ENCODE measurements at regions of chr1 and their contacts with region 1.

Region 1: DNA sequence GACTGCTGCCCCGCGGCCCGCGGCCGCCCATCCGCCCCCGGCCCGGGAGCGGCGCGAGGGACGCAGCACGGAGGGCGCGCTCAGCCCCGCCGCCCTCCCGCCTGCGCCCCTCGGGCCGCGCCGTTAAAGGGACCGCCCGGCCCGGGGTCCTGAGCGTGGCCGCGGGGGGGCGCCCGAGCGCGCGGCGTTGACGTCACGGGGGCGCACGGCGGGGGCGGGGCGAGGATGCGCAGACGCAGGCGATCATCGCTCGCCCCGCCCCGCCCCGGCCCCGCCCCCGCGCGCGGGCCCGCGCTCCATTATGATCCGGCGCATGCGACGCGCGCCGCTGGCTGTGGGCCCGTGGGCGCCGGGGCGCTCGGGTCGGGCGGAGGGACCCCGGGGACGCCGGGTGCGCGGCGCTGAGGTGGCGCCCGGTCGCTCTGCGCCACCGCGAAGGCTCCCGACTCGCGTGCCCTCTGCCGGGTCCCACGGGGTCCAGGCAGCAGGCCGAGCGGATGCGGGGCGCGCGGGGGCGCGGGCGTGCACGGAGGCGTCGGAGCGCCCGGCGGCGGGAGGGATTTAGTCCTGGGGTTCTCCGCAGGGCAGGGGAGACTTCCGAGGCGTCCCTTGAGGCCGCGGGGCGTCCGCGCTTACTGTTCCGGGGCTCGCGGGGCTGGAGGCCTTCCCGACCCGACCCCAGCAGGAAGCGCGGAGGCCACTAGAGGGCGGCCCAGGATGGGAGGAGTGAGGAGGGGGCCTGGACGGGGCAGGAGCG is at the start of gene DVL1:
- DNase-seq: peak in 1 of 2 experiments; percentile 60
- H3K4me3 ChIP-seq: peak within 1 kb of the TSS; percentile 85
- H3K27ac ChIP-seq: peak within 1 kb of the TSS; percentile 56
- H3K4me1 ChIP-seq: peaks cover 33% of the 10 kb centered on the region
- H3K27me3 ChIP-seq: no peaks in the 10 kb centered on the region
- CTCF ChIP-seq: peak; percentile 67
- total RNA-seq, gene DVL1: 95.8 and 98.4 TPM in 2 replicates

Region 2: DNA sequence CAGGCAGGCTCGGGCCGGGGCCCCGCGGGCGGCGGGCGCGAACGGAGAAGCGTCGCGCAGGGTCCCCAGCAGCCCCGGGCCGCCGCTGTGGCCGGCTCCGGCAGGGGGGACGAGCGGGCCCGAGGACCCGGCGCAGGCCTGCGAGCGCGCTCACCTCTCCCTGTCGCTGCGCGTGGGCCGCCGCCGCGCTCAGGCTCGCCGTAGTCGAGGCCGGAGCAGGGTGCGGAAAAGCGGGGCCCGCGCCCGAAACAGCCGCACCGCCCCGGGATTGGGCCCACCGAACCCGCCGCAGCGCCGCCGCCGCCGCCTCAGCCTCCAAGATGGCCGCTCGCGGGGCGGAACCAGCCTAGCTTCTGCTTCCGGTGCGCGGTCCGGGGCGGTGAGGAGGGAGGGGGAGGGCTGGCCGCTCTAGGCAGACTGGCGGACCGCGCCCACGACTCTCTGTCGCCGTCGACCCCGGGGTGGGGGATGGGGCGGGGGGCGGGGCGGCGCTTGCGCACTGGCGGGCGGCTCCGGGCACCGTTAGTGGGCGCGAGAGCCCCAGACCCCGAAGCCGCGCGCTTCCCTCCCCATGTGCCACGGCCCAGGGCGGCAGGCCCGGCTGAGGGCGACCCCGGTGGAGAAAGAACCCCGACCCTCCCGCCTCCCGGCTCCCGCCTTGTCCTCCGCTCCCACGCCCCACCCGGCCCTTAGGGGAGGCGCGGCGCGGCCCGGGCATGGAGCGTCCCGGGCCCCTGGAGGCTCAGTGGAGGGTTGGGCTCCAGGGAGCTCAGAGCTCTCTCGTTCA is 75.7 kb before region 1 on chr1 and contains the start of gene UBE2J2:
- CTCF ChIA-PET with region 1: no interaction called
- POLR2A ChIA-PET with region 1: no interaction called
- intact Hi-C with region 1: loop called (anchors 5 kb)
- DNase-seq: peak; percentile 73 to 85
- H3K4me3 ChIP-seq: peak within 1 kb of the TSS; percentile 70
- H3K27ac ChIP-seq: peak within 1 kb of the TSS; percentile 42
- H3K4me1 ChIP-seq: peaks cover 17% of the 10 kb centered on the region
- H3K27me3 ChIP-seq: no peaks in the 10 kb centered on the region
- CTCF ChIP-seq: no peak
- total RNA-seq, gene UBE2J2: 54.2 and 55.0 TPM in 2 replicates

Region 3: GRCh38 chr1:1307908-1308755 is 41.3 kb before region 1 on chr1 and contains the starts of genes ACAP3 and PUSL1:
- CTCF ChIA-PET with region 1: no interaction called
- POLR2A ChIA-PET with region 1: no interaction called
- intact Hi-C with region 1: loop called (anchors 1 kb)
- DNase-seq: peak; percentile 72 to 89
- H3K4me3 ChIP-seq: peak within 1 kb of the TSS; percentile 84
- H3K27ac ChIP-seq: peak within 1 kb of the TSS; percentile 41
- H3K4me1 ChIP-seq: peaks cover 36% of the 10 kb centered on the region
- H3K27me3 ChIP-seq: no peaks in the 10 kb centered on the region
- CTCF ChIP-seq: no peak
- total RNA-seq, gene ACAP3: 53.5 and 54.8 TPM in 2 replicates
- total RNA-seq, gene PUSL1: 18.0 and 18.9 TPM in 2 replicates

Region 4: GRCh38 chr1:1331068-1331965 is 18.1 kb before region 1 on chr1 and contains the start of gene TAS1R3:
- CTCF ChIA-PET with region 1: no interaction called
- POLR2A ChIA-PET with region 1: no interaction called
- intact Hi-C with region 1: loop called (anchors 2 kb)
- DNase-seq: peak in 1 of 2 experiments; percentile 69
- H3K4me3 ChIP-seq: no peak within 1 kb of the TSS
- H3K27ac ChIP-seq: peak within 1 kb of the TSS; percentile 10; the same call in 1 of the 2 replicates
- H3K4me1 ChIP-seq: peaks cover 19% of the 10 kb centered on the region
- H3K27me3 ChIP-seq: no peaks in the 10 kb centered on the region
- CTCF ChIP-seq: no peak
- total RNA-seq, gene TAS1R3: 0.57 and 1.2 TPM in 2 replicates

Region 5: DNA sequence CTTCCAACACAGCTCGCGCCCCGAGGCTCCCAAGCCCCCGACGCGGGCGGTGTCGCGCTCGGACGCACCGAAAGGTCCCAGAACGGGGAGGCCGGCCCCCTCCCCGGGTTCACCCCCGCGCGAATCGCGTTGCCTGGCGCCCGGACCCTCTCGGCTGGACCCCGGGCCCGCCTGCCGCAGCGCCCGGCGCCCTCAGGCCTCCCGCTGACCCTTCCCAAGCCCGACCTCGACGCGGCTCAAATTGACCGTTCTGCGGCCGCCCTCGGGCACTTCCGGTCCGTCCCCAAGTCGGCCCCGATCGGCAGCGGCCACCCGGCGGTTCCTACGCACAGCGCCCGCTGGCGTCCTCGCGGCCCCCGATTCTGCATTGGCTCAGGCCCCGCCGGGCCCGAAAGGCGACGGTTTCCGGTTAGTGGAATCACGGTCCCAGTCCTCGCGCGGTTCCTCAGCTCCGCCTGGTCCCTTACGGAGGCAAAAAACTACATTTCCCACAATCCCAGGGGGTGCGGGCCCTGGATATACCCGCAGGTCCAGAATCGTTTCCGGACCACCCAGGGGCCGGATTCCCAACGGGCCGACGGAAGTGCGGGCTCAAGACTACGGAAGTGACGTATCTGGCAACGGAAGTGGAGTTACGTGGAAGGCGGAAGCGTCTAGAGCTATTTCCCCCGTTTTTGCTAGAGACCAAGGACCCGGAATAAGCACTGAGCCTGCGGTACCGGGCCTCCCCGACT is 25.7 kb after region 1 on chr1 and contains the start of gene AURKAIP1:
- CTCF ChIA-PET with region 1: interaction called, 5 read pairs
- POLR2A ChIA-PET with region 1: no interaction called
- intact Hi-C with region 1: loop called (anchors 2 kb)
- DNase-seq: peak; percentile 97 to 99
- H3K4me3 ChIP-seq: peak within 1 kb of the TSS; percentile 81
- H3K27ac ChIP-seq: peak within 1 kb of the TSS; percentile 75
- H3K4me1 ChIP-seq: peaks cover 16% of the 10 kb centered on the region
- H3K27me3 ChIP-seq: no peaks in the 10 kb centered on the region
- CTCF ChIP-seq: no peak
- total RNA-seq, gene AURKAIP1: 164 and 210 TPM in 2 replicates

Region 6: GRCh38 chr1:1435106-1435903 is 85.9 kb after region 1 on chr1 and contains the start of gene VWA1:
- CTCF ChIA-PET with region 1: no interaction called
- POLR2A ChIA-PET with region 1: interaction called, 7 read pairs
- intact Hi-C with region 1: loop called (anchors 10 kb)
- DNase-seq: peak in 1 of 2 experiments; percentile 78
- H3K4me3 ChIP-seq: peak within 1 kb of the TSS; percentile 69
- H3K27ac ChIP-seq: no peak within 1 kb of the TSS
- H3K4me1 ChIP-seq: peaks cover 57% of the 10 kb centered on the region
- H3K27me3 ChIP-seq: no peaks in the 10 kb centered on the region
- CTCF ChIP-seq: no peak
- total RNA-seq, gene VWA1: 56.6 and 65.9 TPM in 2 replicates

Measured in PC-9 (cell line).